Heart left ventricle (tissue), 16 donors: ENCODE measurements at regions of chr12 and their contacts with region 1.

Region 1: DNA sequence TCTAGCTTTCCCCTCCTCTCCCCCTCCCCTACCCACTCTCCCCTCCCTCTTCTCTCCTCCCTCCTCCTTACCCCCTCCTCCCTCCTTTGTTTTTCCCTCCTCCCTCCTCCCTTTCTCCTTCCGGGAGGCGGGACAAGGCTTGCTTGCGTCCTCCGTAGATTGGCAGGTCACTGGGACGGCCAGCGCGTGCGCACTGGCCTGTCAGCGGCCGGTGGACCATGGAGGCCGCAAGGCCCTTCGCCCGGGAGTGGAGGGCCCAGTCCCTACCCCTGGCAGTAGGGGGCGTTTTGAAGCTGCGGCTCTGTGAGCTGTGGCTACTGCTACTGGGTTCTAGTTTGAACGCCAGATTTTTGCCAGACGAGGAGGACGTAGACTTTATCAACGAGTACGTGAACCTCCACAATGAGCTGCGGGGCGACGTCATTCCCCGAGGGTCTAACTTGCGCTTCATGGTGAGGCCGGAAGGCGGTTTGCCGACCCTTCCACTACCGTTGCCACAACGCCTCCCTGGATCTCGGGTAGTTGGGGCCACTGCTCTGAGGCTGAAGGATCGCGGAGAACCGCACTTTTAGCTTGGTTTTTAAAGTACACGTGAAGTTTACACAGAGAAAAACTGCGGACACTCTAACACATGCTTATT is at the start of gene GLIPR1L2:
- DNase-seq: peak; percentile 95 to 98 (median 97)
- ATAC-seq: peak; percentile 100
- H3K4me3 ChIP-seq: peak within 1 kb of the TSS; percentile 32 to 78 (median 69)
- H3K27ac ChIP-seq: peak within 1 kb of the TSS; percentile 77 to 95 (median 90)
- H3K4me1 ChIP-seq: peaks cover 2 to 33% (median 18%) of the 10 kb centered on the region in 12 donors
- H3K27me3 ChIP-seq: no peaks in the 10 kb centered on the region
- CTCF ChIP-seq: peak; percentile 70 to 97 (median 83)
- POLR2A ChIP-seq: peak in 1 of 2 donors; percentile 76
- total RNA-seq, gene GLIPR1L2: 0.71 to 4.4 (median 1.7) TPM

Region 2: GRCh38 chr12:75334384-75335030 is 56.5 kb before region 1 on chr12 and contains the start of gene GLIPR1L1:
- intact Hi-C with region 1: loop called in 6 of 10 experiments (anchors 1 to 10 kb)
- DNase-seq: peak; percentile 84 to 90 (median 87)
- ATAC-seq: peak; percentile 81 to 89 (median 87)
- H3K4me3 ChIP-seq: peak within 1 kb of the TSS in 11 of 12 donors; percentile 17 to 59 (median 47)
- H3K27ac ChIP-seq: peak within 1 kb of the TSS in 3 of 12 donors; percentile 10 to 29 (median 24)
- H3K4me1 ChIP-seq: peaks cover 0 to 14% (median 5%) of the 10 kb centered on the region in 12 donors
- H3K27me3 ChIP-seq: no peaks in the 10 kb centered on the region
- CTCF ChIP-seq: peak; percentile 78 to 98 (median 90)
- POLR2A ChIP-seq: no peak
- total RNA-seq, gene GLIPR1L1: not detected

Region 3: GRCh38 chr12:75455831-75456230 is 64.8 kb after region 1 on chr12:
- intact Hi-C with region 1: no loop called
- DNase-seq: peak in 1 of 5 donors; percentile 43
- ATAC-seq: peak in 2 of 4 donors; percentile 24 to 51
- H3K4me3 ChIP-seq: no peak overlapping the region
- H3K27ac ChIP-seq: peak overlapping the region in 1 of 12 donors; percentile 16
- H3K4me1 ChIP-seq: peaks cover 0 to 29% (median 0%) of the 10 kb centered on the region in 12 donors
- H3K27me3 ChIP-seq: no peaks in the 10 kb centered on the region
- CTCF ChIP-seq: no peak
- POLR2A ChIP-seq: no peak

Region 4: GRCh38 chr12:75480469-75480949 is 89.5 kb after region 1 on chr12 and contains the start of gene GLIPR1:
- intact Hi-C with region 1: loop called in 4 of 10 experiments (anchors 5 to 10 kb)
- DNase-seq: peak; percentile 48 to 81 (median 71)
- ATAC-seq: peak; percentile 58 to 95 (median 91)
- H3K4me3 ChIP-seq: peak within 1 kb of the TSS; percentile 9 to 68 (median 45)
- H3K27ac ChIP-seq: peak within 1 kb of the TSS in 11 of 12 donors; percentile 2 to 98 (median 45)
- H3K4me1 ChIP-seq: peaks cover 0 to 69% (median 0%) of the 10 kb centered on the region in 12 donors
- H3K27me3 ChIP-seq: no peaks in the 10 kb centered on the region
- CTCF ChIP-seq: no peak
- POLR2A ChIP-seq: no peak
- total RNA-seq, gene GLIPR1: 3.2 to 58.6 (median 7.4) TPM

Region 5: DNA sequence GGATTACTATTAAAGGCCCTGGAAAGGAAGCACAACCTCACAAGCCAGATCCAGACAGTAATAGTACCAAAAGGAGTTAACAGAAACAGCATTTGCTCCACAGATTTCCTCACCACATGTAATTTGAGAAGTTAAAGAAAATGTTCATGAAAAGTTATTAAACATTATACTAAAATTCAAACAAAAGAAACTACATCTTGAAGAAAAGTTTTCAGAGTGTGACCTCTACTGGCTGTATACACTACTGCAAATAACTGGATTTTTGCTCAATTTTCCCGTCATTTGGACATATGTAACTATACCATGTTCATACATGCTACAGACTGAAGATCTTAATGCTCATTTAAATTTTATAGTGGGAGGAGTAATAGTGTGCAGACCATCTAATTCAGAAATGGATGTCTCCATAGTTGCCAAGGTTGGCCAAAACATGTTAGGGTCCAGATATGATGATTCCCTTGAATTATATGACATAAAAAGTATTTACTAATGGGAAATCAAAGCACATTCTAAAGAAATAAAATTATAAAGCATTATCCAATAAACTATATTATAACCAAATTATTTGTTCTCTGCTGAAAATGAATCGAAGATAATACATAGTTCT is 114.8 kb after region 1 on chr12:
- intact Hi-C with region 1: loop called in 4 of 10 experiments (anchors 2 to 10 kb)
- DNase-seq: no peak
- ATAC-seq: no peak
- H3K4me3 ChIP-seq: no peak overlapping the region
- H3K27ac ChIP-seq: no peak overlapping the region
- H3K4me1 ChIP-seq: peaks cover 0 to 33% (median 12%) of the 10 kb centered on the region in 12 donors
- H3K27me3 ChIP-seq: no peaks in the 10 kb centered on the region
- CTCF ChIP-seq: peak; percentile 21 to 66 (median 49)
- POLR2A ChIP-seq: no peak

Region 6: GRCh38 chr12:75511116-75512048 is 120.4 kb after region 1 on chr12 and contains the start of gene KRR1:
- intact Hi-C with region 1: loop called in 4 of 10 experiments (anchors 2 to 10 kb)
- DNase-seq: peak; percentile 90 to 95 (median 93)
- ATAC-seq: peak; percentile 99 to 100 (median 100)
- H3K4me3 ChIP-seq: peak within 1 kb of the TSS; percentile 64 to 95 (median 81)
- H3K27ac ChIP-seq: peak within 1 kb of the TSS; percentile 12 to 82 (median 74)
- H3K4me1 ChIP-seq: peaks cover 0 to 40% (median 14%) of the 10 kb centered on the region in 12 donors
- H3K27me3 ChIP-seq: no peaks in the 10 kb centered on the region
- CTCF ChIP-seq: peak in 2 of 12 donors; percentile 5 to 6
- POLR2A ChIP-seq: peak in 1 of 2 donors; percentile 43
- total RNA-seq, gene KRR1: 16.4 to 42.6 (median 31.1) TPM

Region 7: GRCh38 chr12:76083904-76084862 is 693.2 kb after region 1 on chr12 and contains the start of gene NAP1L1:
- intact Hi-C with region 1: loop called in 3 of 10 experiments (anchors 2 to 10 kb)
- DNase-seq: peak; percentile 98 to 99 (median 99)
- ATAC-seq: peak; percentile 96 to 99 (median 97)
- H3K4me3 ChIP-seq: peak within 1 kb of the TSS; percentile 76 to 97 (median 90)
- H3K27ac ChIP-seq: peak within 1 kb of the TSS; percentile 95 to 100 (median 99)
- H3K4me1 ChIP-seq: peaks cover 0 to 49% (median 28%) of the 10 kb centered on the region in 12 donors
- H3K27me3 ChIP-seq: no peaks in the 10 kb centered on the region
- CTCF ChIP-seq: no peak
- POLR2A ChIP-seq: peak; percentile 26 to 96
- total RNA-seq, gene NAP1L1: 191 to 359 (median 247) TPM